ENCODE measurements at regions of chr5 and their contacts with region 1.

Region 1: DNA sequence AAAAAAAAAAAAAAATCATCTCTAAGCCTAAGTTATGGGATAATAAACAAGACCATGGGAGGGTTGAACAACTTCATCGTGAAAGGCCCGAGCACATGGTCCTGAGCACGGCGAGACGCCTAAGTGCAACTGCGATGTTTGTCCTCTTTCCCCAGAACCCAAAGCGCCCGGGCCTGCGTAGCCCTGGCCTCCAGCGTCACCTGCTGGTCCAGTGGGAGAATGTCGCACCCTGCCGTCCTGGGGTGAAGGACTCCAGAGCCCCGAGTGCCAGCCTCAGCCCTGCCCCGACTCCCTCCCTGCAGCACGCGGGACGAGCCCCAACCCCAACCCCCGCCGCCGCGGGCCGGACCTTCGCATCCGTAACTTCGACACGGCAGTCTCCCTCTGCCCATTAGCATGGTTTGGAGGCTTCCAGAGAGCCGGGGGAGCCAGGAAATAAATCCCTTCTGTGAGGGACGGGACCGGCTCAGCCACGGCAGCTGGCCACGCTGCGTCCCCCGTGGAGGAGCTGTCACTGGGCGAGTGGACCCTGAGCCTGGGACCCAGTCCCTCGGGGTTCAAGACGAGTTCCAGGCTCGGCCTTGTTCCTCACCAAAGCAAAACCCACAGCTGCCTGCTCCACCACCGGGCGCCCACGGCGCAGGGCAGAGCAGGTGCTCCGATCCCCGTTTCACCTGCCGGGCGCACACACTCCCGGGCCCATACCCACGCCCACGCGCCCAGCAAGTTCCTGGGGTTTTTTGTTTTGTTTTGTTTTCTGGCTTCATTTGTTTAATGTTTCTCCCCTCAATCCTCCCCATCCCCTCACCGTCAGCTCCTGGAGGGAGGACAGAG is 132.5 kb upstream of the HAND1 start:
- DNase-seq: peak; percentile 83

Region 2: DNA sequence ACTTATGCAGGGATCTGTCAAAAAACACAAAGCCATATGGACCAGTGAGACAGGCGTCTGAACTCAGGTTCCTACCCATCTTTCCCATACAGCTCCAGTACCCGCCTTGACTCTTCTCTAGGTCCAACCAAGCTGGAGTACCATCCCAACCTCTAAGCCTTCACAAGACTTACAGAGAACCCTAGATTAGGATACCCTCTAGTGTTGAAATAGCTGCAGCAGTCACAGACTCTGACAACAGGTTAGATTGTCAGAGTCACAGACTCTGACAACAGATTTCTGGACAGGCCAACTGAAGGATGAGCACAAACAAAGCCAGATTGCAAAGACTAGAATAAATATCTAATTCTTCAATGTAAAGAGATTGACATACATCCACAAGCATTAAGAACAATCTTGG is 854.0 kb before region 1 on chr5:
- in situ Hi-C with region 1: no loop called
- DNase-seq: peak; percentile 6

Region 3: GRCh38 chr5:153974813-153975163 is 635.8 kb before region 1 on chr5:
- in situ Hi-C with region 1: loop called (anchors 25 kb)
- DNase-seq: no peak

Region 4: GRCh38 chr5:154087257-154087656 is 523.3 kb before region 1 on chr5:
- in situ Hi-C with region 1: loop called (anchors 25 kb)
- DNase-seq: no peak

Measured in KBM-7 (cell line).